H1 (cell line): ENCODE measurements at regions of chr7 and their contacts with region 1.

Region 1: GRCh38 chr7:116588641-116589594 is 64.1 kb downstream of the CAV1 start:
- DNase-seq: no peak
- H3K4me3 ChIP-seq: no peak overlapping the region
- H3K27ac ChIP-seq: no peak overlapping the region
- H3K4me1 ChIP-seq: peaks cover 0 to 6% (median 2%) of the 10 kb centered on the region in 4 experiments; a peak in 5 of 7 replicates
- H3K27me3 ChIP-seq: no peaks in the 10 kb centered on the region
- CTCF ChIP-seq: peak in 2 of 3 experiments; percentile 33 to 37; a peak in 2 of 4 replicates
- EP300 ChIP-seq: no peak
- POLR2A ChIP-seq: no peak
- RAD21 ChIP-seq: peak; percentile 76 to 78

Region 2: DNA sequence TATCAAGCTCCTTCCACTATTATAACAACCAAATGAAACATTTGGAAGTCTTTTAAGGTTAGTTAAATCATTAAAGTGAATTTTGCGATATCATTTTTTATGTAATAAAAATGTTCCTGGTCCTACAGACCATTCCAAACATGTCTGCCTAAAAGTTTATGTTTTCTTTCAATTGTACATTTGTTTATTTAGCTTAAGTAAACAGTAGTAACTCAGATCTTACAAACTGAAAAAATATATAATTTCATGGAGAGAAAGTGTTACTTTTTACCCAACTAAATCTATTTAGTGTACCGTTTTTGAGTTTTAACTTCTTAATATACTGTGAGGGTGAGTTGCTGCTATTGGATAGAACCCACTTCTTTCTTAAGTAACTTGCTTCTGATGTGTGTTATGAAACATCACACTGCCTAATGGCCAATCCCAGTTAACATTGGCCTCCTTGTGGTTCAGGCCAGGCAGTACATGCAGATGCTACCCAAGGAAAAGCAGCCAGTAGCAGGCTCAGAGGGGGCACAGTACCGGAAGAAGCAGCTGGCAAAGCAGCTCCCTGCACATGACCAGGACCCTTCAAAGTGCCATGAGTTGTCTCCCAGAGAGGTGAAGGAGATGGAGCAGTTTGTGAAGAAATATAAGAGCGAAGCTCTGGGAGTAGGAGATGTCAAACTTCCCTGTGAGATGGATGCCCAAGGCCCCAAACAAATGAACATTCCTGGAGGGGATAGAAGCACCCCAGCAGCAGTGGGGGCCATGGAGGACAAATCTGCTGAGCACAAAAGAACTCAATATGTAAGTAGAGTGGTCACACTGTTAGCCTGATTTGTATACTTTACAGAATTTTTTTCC is 339.0 kb before region 1 on chr7:
- CTCF ChIA-PET with region 1: interaction called, 107 read pairs
- POLR2A ChIA-PET with region 1: interaction called, 3 read pairs
- DNase-seq: peak in 1 of 2 experiments; percentile 54
- H3K4me3 ChIP-seq: no peak overlapping the region
- H3K27ac ChIP-seq: no peak overlapping the region
- H3K4me1 ChIP-seq: peaks cover 0 to 2% (median 0%) of the 10 kb centered on the region in 4 experiments; a peak in 1 of 7 replicates
- H3K27me3 ChIP-seq: no peaks in the 10 kb centered on the region
- CTCF ChIP-seq: peak; percentile 60 to 76 (median 69)
- EP300 ChIP-seq: no peak
- POLR2A ChIP-seq: no peak
- RAD21 ChIP-seq: peak; percentile 46 to 64

Region 3: GRCh38 chr7:116525913-116526861 is 62.7 kb before region 1 on chr7:
- CTCF ChIA-PET with region 1: interaction called, 21 read pairs
- POLR2A ChIA-PET with region 1: no interaction called
- DNase-seq: peak in 1 of 2 experiments; percentile 85
- H3K4me3 ChIP-seq: peak overlapping the region; percentile 72 to 97 (median 73)
- H3K27ac ChIP-seq: no peak overlapping the region
- H3K4me1 ChIP-seq: peaks cover 2 to 12% (median 10%) of the 10 kb centered on the region in 4 experiments; a peak in 5 of 7 replicates
- H3K27me3 ChIP-seq: peaks cover 0 to 20% (median 12%) of the 10 kb centered on the region in 4 experiments; a peak in 6 of 7 replicates
- CTCF ChIP-seq: peak; percentile 62 to 74 (median 64)
- EP300 ChIP-seq: no peak
- POLR2A ChIP-seq: peak in 1 of 2 experiments; percentile 5; a peak in 1 of 3 replicates
- RAD21 ChIP-seq: peak; percentile 20 to 67; a peak in 3 of 4 replicates

Region 4: DNA sequence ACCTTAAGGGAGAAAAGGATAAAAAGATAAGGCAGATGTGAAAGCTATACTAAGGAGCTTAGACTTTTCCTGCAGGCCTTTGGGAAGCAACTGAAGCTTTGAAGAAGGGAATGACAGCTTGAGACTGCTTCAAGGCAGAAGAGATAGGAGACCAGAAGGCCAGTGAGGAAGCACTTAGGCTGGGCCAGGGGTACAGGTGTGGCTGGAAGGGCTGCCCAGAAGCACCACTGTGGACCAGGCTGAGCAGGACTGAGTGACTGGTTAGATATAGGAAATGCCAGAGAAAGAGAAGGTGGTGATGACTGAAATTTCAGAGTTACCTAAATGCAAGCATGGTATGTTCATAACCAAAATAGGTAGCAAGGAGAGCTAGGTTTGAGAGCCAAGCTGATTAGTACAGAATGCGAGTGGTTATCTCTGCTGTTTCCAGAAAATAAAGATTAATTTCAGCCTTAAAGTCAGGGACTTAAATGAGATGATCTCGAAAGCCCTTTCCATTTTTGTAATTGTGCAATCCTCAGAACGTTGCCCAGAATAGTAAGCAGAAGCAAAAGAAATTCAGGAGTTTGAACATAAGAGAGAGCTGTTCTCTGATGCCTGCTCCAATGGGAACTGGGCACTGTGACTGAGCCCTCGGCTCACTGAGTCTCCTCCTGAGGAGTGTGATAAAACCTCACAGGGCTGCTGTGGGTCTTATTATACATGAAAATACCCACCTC is 138.0 kb after region 1 on chr7:
- CTCF ChIA-PET with region 1: interaction called, 12 read pairs
- POLR2A ChIA-PET with region 1: no interaction called
- DNase-seq: no peak
- H3K4me3 ChIP-seq: no peak overlapping the region
- H3K27ac ChIP-seq: no peak overlapping the region
- H3K4me1 ChIP-seq: 0 out of 7 replicates have a peak, but pooled peaks cover 0 to 2% (median 0%) of the 10 kb centered on the region in 4 experiments
- H3K27me3 ChIP-seq: no peaks in the 10 kb centered on the region
- CTCF ChIP-seq: no peak
- EP300 ChIP-seq: no peak
- POLR2A ChIP-seq: no peak
- RAD21 ChIP-seq: no peak

Region 5: DNA sequence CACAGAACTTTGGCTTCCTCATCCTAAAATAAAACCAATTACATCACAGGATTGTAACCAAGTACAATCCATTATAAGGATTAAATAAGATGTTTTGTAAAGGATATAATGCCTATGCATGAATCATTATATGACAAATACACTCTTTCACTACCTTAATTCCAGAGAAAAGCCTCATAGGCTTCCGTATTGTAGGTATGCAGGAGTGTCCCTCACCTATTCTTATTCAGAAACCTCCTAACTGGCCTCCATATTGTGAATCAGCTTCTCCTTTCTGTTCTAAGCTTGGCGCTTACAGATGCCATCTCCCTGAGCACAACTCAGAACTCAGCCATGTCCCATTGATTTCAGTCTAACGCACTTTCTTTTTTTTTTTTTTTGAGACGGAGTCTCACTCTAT is 203.9 kb after region 1 on chr7:
- CTCF ChIA-PET with region 1: interaction called, 14 read pairs
- POLR2A ChIA-PET with region 1: no interaction called
- DNase-seq: no peak
- H3K4me3 ChIP-seq: no peak overlapping the region
- H3K27ac ChIP-seq: no peak overlapping the region
- H3K4me1 ChIP-seq: no peaks in the 10 kb centered on the region; a peak in 1 of 7 replicates
- H3K27me3 ChIP-seq: no peaks in the 10 kb centered on the region
- CTCF ChIP-seq: no peak
- EP300 ChIP-seq: no peak
- POLR2A ChIP-seq: no peak
- RAD21 ChIP-seq: no peak